Activated CD8-positive, alpha-beta T cell treated with anti-CD3 and anti-CD28 coated beads, Interleukin-2, amount 10 ng/mL, durations not matched to agents 7 days and 5 days (primary cell): ENCODE measurements at regions of chr17 and their contacts with region 1.

Region 1: GRCh38 chr17:75319904-75320691 is 30.9 kb upstream of the SLC25A19 start:
- DNase-seq: no peak
- ATAC-seq: no peak
- H3K4me3 Mint-ChIP-seq: no peak overlapping the region
- H3K27ac Mint-ChIP-seq: peak overlapping the region; percentile 57
- H3K4me1 Mint-ChIP-seq: peaks cover 28% of the 10 kb centered on the region
- H3K27me3 Mint-ChIP-seq: no peaks in the 10 kb centered on the region

Region 2: GRCh38 chr17:75131280-75132017 is 188.6 kb before region 1 on chr17 and contains the start of gene NT5C:
- CTCF ChIA-PET with region 1: no interaction called
- POLR2A ChIA-PET with region 1: no interaction called
- DNase-seq: peak; percentile 77
- ATAC-seq: peak; percentile 78
- H3K4me3 Mint-ChIP-seq: peak within 1 kb of the TSS; percentile 87
- H3K27ac Mint-ChIP-seq: peak within 1 kb of the TSS; percentile 88
- H3K4me1 Mint-ChIP-seq: peaks cover 27% of the 10 kb centered on the region
- H3K27me3 Mint-ChIP-seq: no peaks in the 10 kb centered on the region
- total RNA-seq, gene NT5C: 68.5 to 68.8 TPM

Region 3: DNA sequence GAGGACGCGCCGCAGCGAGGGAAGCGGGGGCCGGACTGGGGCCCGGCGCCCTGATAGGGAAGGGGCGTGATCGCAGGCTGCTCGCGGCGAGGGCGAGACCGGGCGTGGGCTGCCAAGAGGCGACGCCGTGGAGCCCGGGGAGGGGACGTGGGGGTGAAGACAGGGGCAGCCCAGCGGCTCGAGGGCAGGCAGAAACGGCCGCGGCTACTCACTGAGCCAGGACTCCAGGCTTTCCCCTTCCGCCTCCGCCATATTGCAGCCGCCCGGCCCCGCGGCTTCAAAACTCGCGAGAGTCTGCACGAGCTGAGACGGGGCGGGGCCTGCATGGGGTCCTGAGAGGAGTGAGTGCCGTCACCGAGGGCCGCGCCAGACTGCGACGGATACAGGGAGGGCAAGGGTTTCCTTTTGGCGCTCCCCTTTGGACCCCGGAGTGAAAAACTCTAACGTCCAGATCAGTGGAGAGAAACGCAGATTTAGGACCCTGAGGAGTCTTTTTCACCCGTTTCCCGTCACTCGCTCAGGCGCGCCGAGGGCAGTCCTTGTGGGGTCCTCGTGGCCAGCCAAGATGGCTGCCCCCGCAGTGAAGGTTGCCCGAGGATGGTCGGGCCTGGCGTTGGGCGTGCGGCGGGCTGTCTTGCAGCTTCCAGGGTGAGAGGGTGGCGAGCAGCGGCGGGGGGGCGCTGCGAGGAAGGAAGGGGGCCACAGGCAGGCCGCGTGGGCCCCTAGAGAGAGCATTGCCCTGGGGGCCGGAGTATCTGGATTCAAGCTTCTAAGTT is 58.6 kb before region 1 on chr17 and contains the starts of genes GGA3 and MRPS7:
- CTCF ChIA-PET with region 1: no interaction called
- POLR2A ChIA-PET with region 1: no interaction called
- DNase-seq: peak; percentile 97
- ATAC-seq: peak; percentile 94
- H3K4me3 Mint-ChIP-seq: peak within 1 kb of the TSS; percentile 95
- H3K27ac Mint-ChIP-seq: peak within 1 kb of the TSS; percentile 99
- H3K4me1 Mint-ChIP-seq: peaks cover 38% of the 10 kb centered on the region
- H3K27me3 Mint-ChIP-seq: no peaks in the 10 kb centered on the region
- total RNA-seq, gene GGA3: 65.7 to 75.4 TPM
- total RNA-seq, gene MRPS7: 62.1 to 66.1 TPM

Region 4: DNA sequence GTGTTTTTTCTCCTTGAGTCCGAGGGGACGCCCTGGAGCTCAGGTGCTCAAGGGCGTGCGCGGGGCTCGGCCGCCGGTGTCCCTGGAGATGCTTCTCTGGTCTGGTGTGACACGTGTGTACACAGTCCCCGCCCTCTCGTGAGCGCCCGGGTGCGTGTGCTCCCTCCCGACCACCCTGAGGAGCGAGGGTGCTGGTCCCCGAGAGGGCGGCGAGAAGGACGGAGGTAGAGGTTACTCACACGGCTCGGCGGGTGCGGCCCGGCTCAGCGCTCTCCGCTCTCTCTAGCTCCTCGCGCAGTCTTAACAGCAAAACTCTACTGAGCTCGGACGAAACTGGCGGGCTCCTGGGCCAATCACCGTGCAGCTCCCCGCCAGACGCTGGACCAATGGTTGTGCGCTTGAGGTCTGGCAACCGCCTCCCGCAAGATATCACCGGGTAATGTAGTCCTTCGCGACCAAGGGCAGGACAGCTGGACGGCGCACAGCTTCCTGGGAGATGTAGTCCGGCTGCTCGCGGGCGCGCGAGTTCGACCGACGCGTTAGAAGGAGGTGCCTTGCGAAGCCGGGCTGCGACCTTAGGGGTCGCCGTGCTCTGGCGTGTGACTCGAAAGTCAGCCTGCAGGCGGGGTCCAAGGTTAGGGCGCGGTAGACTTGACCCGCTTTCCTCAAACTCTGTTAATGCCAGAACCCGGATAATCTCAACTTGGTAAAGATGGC is 30.8 kb before region 1 on chr17 and contains the start of gene SLC25A19:
- CTCF ChIA-PET with region 1: interaction called, 25 read pairs
- POLR2A ChIA-PET with region 1: interaction called, 7 read pairs
- DNase-seq: peak; percentile 99
- ATAC-seq: peak; percentile 92
- H3K4me3 Mint-ChIP-seq: peak within 1 kb of the TSS; percentile 97
- H3K27ac Mint-ChIP-seq: peak within 1 kb of the TSS; percentile 100
- H3K4me1 Mint-ChIP-seq: peaks cover 27% of the 10 kb centered on the region
- H3K27me3 Mint-ChIP-seq: no peaks in the 10 kb centered on the region
- total RNA-seq, gene SLC25A19: 41.1 to 43.6 TPM

Region 5: DNA sequence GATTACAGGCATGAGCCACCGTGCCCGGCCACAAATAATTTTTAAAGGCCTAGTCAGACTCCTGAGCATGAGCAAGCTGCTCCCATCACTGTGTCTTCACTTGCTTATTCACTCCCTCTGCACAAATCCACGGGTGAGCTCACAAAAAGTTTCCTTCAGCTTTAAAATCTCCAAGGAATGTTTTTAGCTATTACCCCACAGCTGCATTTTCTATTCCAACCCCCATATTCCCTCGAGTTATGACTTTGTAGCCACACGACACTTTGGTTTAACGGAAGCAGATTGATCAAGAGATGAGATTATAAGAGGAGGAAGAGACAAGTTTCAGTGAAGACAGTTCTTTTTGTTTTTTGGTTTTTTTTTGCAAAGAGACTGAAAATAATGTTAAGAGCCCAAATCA is 18.2 kb after region 1 on chr17:
- CTCF ChIA-PET with region 1: interaction called, 46 read pairs
- POLR2A ChIA-PET with region 1: interaction called, 3 read pairs
- DNase-seq: no peak
- ATAC-seq: peak; percentile 54
- H3K4me3 Mint-ChIP-seq: peak overlapping the region; percentile 60
- H3K27ac Mint-ChIP-seq: peak overlapping the region; percentile 88
- H3K4me1 Mint-ChIP-seq: peaks cover 81% of the 10 kb centered on the region
- H3K27me3 Mint-ChIP-seq: no peaks in the 10 kb centered on the region

Region 6: DNA sequence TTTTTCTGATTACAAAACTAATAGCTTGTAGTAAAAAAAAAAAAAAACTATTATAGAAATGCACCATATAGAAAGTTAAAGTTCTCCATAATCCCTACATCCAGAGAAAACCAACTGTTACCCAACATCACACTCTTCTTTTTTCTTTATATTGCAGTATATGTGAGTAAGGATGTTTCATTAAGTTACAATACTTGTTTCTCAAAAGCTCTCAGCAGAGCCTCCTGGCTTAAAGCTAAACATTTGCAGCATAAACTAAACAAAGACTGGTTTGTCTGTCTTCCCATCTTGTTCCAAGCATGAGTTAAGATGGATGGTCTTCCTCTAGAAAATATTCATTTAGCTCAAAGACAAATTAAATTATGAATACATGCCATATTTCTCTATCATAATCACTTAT is 60.2 kb after region 1 on chr17:
- CTCF ChIA-PET with region 1: interaction called, 15 read pairs
- POLR2A ChIA-PET with region 1: no interaction called
- DNase-seq: no peak
- ATAC-seq: no peak
- H3K4me3 Mint-ChIP-seq: no peak overlapping the region
- H3K27ac Mint-ChIP-seq: no peak overlapping the region
- H3K4me1 Mint-ChIP-seq: peaks cover 23% of the 10 kb centered on the region
- H3K27me3 Mint-ChIP-seq: no peaks in the 10 kb centered on the region

Region 7: GRCh38 chr17:75405365-75406221 is 85.5 kb after region 1 on chr17 and contains the start of gene GRB2:
- CTCF ChIA-PET with region 1: interaction called, 50 read pairs
- POLR2A ChIA-PET with region 1: interaction called, 5 read pairs
- DNase-seq: peak; percentile 100
- ATAC-seq: peak; percentile 87
- H3K4me3 Mint-ChIP-seq: peak within 1 kb of the TSS; percentile 97
- H3K27ac Mint-ChIP-seq: peak within 1 kb of the TSS; percentile 95
- H3K4me1 Mint-ChIP-seq: peaks cover 49% of the 10 kb centered on the region
- H3K27me3 Mint-ChIP-seq: no peaks in the 10 kb centered on the region
- total RNA-seq, gene GRB2: 166 to 178 TPM

Region 8: GRCh38 chr17:75428543-75429469 is 108.7 kb after region 1 on chr17:
- CTCF ChIA-PET with region 1: no interaction called
- POLR2A ChIA-PET with region 1: no interaction called
- DNase-seq: no peak
- ATAC-seq: no peak
- H3K4me3 Mint-ChIP-seq: no peak overlapping the region
- H3K27ac Mint-ChIP-seq: no peak overlapping the region
- H3K4me1 Mint-ChIP-seq: peaks cover 12% of the 10 kb centered on the region
- H3K27me3 Mint-ChIP-seq: peaks cover 25% of the 10 kb centered on the region